GM13976 (cell line): ENCODE measurements at regions of chr5 and their contacts with region 1.

Region 1: DNA sequence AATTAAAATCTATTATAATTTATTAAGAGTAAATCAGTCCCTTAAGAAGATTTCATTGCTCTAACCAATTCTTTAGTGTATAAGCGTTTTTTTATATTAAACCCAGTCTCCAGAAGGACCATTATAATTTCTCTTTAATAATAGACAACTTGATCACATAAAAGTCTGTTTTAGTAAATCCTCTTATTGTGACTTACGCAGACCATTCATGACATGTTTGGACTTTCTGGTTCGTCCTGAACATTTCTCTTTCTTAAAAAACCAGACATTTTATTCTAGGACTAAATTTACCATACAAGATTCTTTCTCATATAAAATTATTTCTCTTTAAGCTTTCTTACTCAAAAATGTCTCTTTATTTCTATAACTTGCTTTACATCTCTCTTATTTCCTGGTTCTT is 196.2 kb upstream of the RAI14 start:
- DNase-seq: no peak
- CTCF ChIP-seq: no peak

Region 2: DNA sequence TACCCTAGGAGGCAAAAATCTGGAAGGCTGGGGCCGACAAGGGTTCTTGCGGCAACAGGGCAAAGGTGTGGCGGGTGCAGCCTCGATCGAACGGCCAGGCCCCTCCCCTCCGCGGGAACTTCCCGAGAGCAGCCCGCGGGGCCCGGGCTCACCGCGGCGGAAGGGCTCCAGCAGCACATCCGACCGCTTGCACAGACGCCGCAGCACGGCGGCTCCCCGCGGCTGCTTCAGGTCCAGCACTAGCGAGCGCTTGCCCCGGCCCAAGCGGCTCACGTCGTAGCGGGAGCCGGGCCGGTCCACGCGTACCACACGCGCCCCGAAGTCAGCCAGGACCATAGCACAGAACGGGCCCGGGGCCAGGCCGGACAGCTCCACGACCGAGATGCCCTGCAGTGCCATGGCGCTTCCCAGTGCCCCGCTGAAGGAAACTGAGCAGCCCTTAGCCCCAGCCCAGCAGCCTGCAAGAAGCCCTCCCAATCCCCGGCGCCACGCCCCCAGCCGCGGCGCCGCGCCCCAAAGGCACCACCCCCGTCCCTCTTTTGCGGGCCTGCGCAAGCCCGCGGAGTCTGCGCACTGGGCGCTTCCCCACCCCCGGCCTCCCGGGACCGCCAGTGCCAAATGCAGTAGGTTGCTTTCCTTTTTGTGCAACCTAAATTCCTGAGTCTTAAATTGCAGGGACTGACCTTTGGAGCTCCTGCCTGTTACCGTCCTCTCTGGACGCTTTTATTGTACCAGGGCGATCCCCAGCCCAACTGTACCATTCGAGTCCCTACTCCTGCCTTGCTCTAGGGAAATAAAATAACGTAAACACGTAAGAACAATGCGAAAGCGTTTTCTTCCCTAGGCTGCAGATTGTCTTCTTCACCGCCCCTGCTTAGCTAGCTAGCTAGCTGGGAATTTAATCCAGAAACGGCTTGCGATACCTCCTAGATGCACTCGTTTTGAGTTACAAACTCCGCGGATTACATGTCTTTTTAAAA is 452.0 kb before region 1 on chr5 and contains the start of gene AMACR:
- in situ Hi-C with region 1: loop called (anchors 10 kb)
- DNase-seq: peak; percentile 96
- CTCF ChIP-seq: peak; percentile 4

Region 3: DNA sequence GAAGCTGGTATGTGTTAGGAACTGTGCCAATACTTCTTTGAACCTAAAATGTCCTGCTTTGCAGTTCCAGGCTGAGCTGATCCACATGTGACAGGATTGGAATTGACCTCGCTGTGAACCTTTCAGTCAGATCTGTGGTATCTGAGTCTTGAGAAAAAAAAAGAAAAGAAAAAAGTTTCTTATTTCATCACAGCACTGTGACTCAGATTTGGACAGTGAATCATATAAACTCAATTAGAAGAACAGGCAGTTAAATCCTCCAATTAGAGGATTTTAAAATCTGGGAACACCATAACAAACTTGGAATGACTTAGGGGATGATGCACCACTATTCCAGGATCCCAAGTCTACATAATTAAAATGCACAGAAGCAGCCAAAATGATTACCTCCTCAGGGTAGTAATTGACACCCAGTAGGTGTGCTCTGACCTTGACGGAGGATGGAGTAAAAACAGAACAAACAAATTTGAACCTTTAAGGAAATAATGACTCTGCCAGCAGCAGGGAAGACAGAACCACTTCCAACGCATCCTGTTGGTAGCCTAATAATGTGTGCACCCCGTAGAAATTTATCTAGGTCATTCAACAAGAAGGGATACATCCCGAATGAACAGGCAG is 138.4 kb after region 1 on chr5:
- in situ Hi-C with region 1: no loop called
- DNase-seq: no peak
- CTCF ChIP-seq: no peak

Region 4: DNA sequence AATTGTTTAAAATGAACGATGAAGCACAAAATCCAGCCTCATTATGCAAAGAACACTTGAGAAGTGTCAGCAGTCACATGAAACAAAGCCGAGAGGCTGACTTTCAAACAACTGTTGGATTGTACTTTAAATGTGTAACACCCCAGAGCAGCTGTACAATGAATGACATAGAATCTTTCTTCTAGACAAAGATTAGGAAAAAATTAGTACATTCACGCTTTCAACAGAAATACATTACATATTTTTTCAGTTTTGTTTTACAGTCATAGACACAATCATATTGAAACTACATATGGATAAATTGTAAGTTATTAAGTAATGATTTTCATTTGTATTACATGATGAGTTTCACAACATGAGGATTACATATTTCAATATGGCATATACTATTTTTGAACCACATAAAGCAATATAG is 598.5 kb after region 1 on chr5:
- in situ Hi-C with region 1: no loop called
- DNase-seq: peak; percentile 13
- CTCF ChIP-seq: no peak